HEK293T (cell line): ENCODE measurements at regions of chrX and their contacts with region 1.

Region 1: DNA sequence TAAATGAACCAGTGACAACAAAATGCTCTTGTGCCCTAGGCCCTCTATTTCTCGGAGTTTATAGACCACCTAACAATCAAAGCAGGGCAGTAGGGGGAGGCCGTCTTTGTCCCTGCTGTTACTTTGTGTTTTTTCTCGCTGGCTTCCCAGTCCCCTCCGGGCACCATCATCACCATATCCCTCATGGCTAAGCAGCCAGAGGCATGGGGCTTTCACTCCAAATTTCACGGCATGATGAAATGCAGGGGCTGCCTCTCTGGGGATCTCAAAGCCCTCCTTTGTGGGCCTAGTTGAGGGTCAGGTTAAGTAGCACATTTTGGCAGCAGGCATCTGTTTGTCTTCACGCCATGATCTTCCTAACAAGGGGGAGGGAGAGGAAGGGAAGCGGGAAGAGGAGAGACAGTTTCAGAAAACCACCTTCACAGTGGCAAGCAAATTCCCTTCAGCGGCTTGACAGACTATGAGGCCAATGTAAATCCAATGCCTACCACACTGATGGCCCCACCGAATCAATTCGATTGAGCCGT is 91.9 kb downstream of the ANOS1 start:
- DNase-seq: no peak

Region 2: DNA sequence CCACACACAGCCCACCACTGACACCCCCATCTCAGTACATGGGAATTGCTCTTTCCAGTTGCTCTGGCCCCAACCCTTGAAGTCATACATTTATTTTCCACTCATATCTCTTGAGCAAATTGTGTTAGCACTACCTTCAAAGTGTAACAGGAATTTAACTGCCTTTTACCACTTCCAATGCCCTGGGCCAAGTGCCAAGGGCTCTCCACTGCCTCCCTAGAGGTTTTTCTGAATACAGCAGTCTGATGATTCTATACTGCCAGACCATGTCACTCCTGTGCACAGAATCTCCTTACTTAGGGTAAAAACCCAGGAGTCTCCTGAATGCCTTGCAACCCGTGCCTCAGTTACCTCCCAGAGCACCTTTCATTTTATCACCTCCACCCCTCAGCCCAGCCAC is 66.3 kb before region 1 on chrX:
- CTCF ChIA-PET with region 1: no interaction called
- POLR2A ChIA-PET with region 1: no interaction called
- DNase-seq: no peak

Region 3: DNA sequence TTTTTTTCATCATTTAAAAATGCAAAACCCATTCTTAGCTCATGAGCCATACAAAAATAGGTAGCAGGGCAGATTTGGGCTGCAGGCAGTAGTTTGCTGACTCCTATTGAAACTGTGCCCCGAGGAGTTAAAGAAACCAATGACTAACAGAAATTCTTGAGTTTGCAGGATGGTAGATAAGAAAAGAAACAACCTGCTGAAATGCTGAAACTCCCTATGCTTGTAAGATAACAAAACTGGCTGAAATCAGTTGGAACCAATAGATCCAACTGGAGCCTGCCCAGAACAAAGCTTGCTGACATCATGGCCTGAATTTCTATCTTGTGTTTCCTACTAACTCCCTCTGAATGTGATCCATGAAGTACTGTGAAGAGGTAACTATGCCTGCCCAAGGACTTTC is 23.3 kb after region 1 on chrX:
- CTCF ChIA-PET with region 1: no interaction called
- POLR2A ChIA-PET with region 1: no interaction called
- DNase-seq: no peak

Region 4: DNA sequence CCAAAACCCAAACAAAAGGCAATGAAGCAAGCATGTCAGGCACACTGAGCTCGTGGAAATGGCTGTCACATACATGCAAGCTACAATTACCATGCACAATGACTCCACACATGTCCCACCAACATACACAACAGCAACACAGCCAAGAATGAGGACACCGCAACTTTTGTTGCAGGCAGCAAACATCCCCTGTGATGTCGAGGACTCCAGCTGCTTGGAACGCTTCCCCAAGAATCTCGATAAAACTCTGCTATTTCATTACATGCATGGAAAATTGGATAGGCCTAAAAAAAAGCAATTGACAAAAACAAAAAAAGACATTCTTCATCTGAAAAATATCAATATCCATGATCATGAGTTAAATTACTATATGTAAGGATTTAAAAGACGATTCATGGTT is 80.1 kb after region 1 on chrX:
- CTCF ChIA-PET with region 1: interaction called, 10 read pairs
- POLR2A ChIA-PET with region 1: no interaction called
- DNase-seq: no peak